ENCODE measurements at regions of chr5 and their contacts with region 1.

Region 1: GRCh38 chr5:159106569-159107282 is 7.0 kb upstream of the EBF1 start:
- DNase-seq: peak; percentile 86
- H3K4me3 Mint-ChIP-seq: peak overlapping the region; percentile 64
- H3K27ac Mint-ChIP-seq: peak overlapping the region; percentile 7
- H3K4me1 Mint-ChIP-seq: peaks cover 14% of the 10 kb centered on the region
- H3K27me3 Mint-ChIP-seq: peaks cover 63% of the 10 kb centered on the region
- CTCF ChIP-seq: peak; percentile 100

Region 2: GRCh38 chr5:157924931-157925729 is 1181.6 kb before region 1 on chr5:
- CTCF ChIA-PET with region 1: no interaction called
- POLR2A ChIA-PET with region 1: no interaction called
- intact Hi-C with region 1: loop called (anchors 5 kb)
- DNase-seq: no peak
- H3K4me3 Mint-ChIP-seq: no peak overlapping the region
- H3K27ac Mint-ChIP-seq: no peak overlapping the region
- H3K4me1 Mint-ChIP-seq: peaks cover 9% of the 10 kb centered on the region
- H3K27me3 Mint-ChIP-seq: no peaks in the 10 kb centered on the region
- CTCF ChIP-seq: no peak

Region 3: GRCh38 chr5:158054223-158055110 is 1052.3 kb before region 1 on chr5:
- CTCF ChIA-PET with region 1: interaction called, 10 read pairs
- POLR2A ChIA-PET with region 1: no interaction called
- intact Hi-C with region 1: no loop called
- DNase-seq: peak; percentile 21
- H3K4me3 Mint-ChIP-seq: peak overlapping the region; percentile 19
- H3K27ac Mint-ChIP-seq: peak overlapping the region; percentile 55
- H3K4me1 Mint-ChIP-seq: peaks cover 55% of the 10 kb centered on the region
- H3K27me3 Mint-ChIP-seq: no peaks in the 10 kb centered on the region
- CTCF ChIP-seq: no peak

Region 4: DNA sequence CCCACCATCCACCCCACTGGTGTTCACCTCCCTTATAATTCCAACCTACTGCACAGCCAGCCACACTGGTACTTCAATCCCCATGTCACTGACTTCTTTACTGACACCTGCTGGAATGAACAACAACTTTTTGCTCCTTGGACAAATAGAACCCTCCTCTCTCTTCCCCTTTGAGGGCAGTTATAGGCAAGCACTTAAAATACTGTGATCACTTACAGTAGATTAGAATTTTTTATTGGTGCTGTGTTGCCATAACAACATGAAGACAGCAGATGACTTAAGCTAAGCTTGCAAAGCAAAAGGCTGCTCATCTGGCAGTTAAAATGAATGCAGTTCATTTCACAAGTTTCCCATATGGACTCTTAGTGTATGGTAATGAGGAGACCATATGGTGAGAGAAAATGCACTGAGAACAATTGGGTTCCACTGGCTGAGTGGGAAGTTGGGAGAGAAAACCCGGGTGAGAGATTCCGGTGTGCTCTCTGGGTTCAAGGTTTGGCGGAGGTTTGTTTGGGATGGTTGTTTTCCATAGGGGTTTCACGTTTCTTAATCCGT is 381.4 kb before region 1 on chr5:
- CTCF ChIA-PET with region 1: interaction called, 18 read pairs
- POLR2A ChIA-PET with region 1: no interaction called
- intact Hi-C with region 1: no loop called
- DNase-seq: no peak
- H3K4me3 Mint-ChIP-seq: no peak overlapping the region
- H3K27ac Mint-ChIP-seq: no peak overlapping the region
- H3K4me1 Mint-ChIP-seq: peaks cover 8% of the 10 kb centered on the region
- H3K27me3 Mint-ChIP-seq: peaks cover 35% of the 10 kb centered on the region
- CTCF ChIP-seq: no peak

Region 5: GRCh38 chr5:159120446-159120845 is 13.7 kb after region 1 on chr5:
- CTCF ChIA-PET with region 1: interaction called, 14 read pairs
- POLR2A ChIA-PET with region 1: interaction called, 3 read pairs
- intact Hi-C with region 1: no loop called
- DNase-seq: no peak
- H3K4me3 Mint-ChIP-seq: peak overlapping the region; percentile 1
- H3K27ac Mint-ChIP-seq: peak overlapping the region; percentile 13
- H3K4me1 Mint-ChIP-seq: peaks cover 10% of the 10 kb centered on the region
- H3K27me3 Mint-ChIP-seq: no peaks in the 10 kb centered on the region
- CTCF ChIP-seq: no peak

Region 6: DNA sequence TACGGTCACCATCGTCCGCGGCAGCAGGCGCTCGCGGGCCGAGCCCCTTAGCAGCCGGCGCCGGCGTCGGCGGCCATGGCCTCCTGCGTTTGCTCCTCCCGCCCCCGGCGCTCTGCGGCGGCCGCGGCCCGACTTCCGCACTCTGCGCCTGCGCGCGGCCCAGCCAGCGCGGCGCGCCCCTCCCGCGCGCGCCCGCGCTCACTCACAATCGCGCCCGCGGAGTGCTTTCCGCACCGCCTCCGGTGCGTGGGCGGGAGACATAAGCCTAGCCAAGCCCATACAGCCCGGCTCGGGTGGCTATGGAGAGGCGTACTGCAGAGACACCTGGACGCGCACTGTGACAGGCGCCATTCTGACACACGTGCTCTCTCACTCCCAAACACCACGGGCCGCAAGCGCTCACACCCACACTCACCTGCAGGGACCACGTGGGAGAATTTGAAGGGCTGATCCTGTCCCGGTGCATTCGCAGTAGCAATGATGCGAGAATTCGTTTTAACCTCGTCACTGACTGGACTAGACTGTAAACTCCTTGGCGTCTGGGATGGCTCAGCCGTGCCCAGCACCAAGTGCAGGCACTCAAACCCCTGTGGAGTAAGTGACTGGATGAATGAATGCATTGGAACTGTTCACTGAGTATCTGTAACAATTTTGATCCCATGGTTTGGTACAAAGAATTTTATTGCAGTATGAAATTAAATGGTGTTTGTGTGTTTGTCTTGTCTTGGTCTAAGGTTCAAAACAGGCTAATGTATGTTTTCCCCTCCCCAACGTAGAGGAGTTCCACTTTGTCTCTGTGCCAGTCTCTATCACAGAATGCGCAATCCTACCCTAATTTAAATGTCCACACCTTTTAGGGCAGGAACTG is 102.9 kb after region 1 on chr5 and contains the start of gene RNF145:
- CTCF ChIA-PET with region 1: no interaction called
- POLR2A ChIA-PET with region 1: no interaction called
- intact Hi-C with region 1: no loop called
- DNase-seq: peak; percentile 95
- H3K4me3 Mint-ChIP-seq: peak within 1 kb of the TSS; percentile 97
- H3K27ac Mint-ChIP-seq: peak within 1 kb of the TSS; percentile 99
- H3K4me1 Mint-ChIP-seq: peaks cover 42% of the 10 kb centered on the region
- H3K27me3 Mint-ChIP-seq: no peaks in the 10 kb centered on the region
- CTCF ChIP-seq: no peak
- total RNA-seq, gene RNF145: 122 and 157 TPM in 2 replicates

Region 7: GRCh38 chr5:159430361-159431012 is 323.8 kb after region 1 on chr5:
- CTCF ChIA-PET with region 1: no interaction called
- POLR2A ChIA-PET with region 1: no interaction called
- intact Hi-C with region 1: no loop called
- DNase-seq: no peak
- H3K4me3 Mint-ChIP-seq: no peak overlapping the region
- H3K27ac Mint-ChIP-seq: no peak overlapping the region
- H3K4me1 Mint-ChIP-seq: no peaks in the 10 kb centered on the region
- H3K27me3 Mint-ChIP-seq: peaks cover 13% of the 10 kb centered on the region
- CTCF ChIP-seq: no peak

Measured in MCF 10A (cell line).